Dorsolateral prefrontal cortex (tissue), 120 donors: ENCODE measurements at regions of chr11 and their contacts with region 1.

Region 1: DNA sequence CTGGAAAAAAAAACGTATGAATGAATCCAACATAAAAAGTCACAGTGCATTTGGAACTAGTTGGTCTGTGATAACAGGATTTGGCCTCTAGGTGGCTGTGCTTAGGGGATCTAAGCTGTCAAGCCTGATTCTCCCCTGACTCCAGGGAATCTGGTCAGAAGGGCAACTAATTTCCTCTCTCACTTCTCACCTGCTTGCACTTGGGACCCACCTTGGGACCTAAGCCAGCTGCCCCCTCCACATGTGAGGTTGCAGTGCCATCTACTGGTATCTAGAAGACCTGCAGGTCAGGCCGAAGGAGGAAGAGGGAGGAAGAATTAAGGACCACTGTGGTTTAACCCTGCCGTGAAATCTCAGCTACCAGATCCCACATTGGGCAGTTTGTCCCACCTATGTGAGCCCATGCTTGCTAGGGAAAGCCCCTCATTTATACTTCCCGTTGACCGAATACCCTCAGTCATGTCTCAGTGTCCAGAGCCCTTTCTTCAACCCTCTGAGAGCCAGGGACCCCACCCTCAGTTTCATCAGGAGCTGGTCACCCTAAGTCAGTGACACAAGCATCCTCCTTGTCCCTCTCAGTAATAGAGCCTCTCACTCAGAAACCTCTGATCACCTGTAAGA is 33.2 kb upstream of the CAVIN3 start:
- DNase-seq: peak in 3 of 10 donors; percentile 16 to 57 (median 51)
- H3K4me3 ChIP-seq: no peak overlapping the region
- H3K27ac ChIP-seq: no peak overlapping the region
- H3K27me3 ChIP-seq: no peaks in the 10 kb centered on the region
- CTCF ChIP-seq: peak; percentile 46 to 96 (median 86)

Region 2: DNA sequence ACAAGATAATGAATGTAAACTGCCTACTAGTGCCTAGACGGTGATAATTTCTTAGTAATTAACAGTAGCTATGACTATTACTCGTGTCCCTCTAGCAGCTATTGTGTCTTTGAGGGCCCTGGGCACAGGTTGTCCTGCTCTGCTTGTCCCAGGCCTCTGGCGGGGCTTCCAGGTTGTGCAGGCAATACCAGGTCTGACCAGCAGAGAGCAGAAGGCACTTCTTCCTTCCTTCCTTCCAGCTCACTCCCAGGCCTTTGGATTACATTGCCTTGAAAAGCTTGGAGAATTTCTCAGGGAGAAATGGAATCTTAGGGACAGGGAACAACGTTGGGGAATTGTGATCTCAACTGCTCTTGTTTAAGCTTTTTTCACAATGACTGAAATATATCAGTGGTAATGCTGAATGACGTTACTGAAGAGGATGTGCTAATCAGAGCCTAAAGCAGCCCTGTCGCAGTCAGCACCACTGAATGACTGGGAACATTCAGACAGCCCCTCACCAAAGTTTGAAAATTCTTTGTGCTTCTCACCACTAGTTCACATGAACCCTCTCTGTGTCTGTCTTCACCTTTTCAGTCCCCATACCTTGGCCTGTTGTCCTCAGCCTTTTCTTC is 102.2 kb before region 1 on chr11:
- intact Hi-C with region 1: loop called (anchors 5 kb)
- DNase-seq: peak in 7 of 10 donors; percentile 46 to 79 (median 64)
- H3K4me3 ChIP-seq: no peak overlapping the region
- H3K27ac ChIP-seq: peak overlapping the region in 55 of 59 donors; percentile 29 to 93 (median 73)
- H3K27me3 ChIP-seq: peaks cover 0 to 8% (median 0%) of the 10 kb centered on the region in 45 donors
- CTCF ChIP-seq: peak; percentile 41 to 91 (median 81)

Region 3: GRCh38 chr11:6333112-6333511 is 20.4 kb before region 1 on chr11:
- intact Hi-C with region 1: no loop called
- DNase-seq: peak in 2 of 10 donors; percentile 23 to 40
- H3K4me3 ChIP-seq: no peak overlapping the region
- H3K27ac ChIP-seq: peak overlapping the region in 3 of 59 donors; percentile 4 to 25 (median 17)
- H3K27me3 ChIP-seq: peaks cover 0 to 4% (median 0%) of the 10 kb centered on the region in 45 donors
- CTCF ChIP-seq: no peak